GM12878 (cell line): ENCODE measurements at regions of chr14 and their contacts with region 1.

Region 1: GRCh38 chr14:50599700-50600444 is 39.9 kb downstream of the ATL1 start:
- DNase-seq: no peak
- ATAC-seq: peak; percentile 76
- H3K4me3 ChIP-seq: no peak overlapping the region
- H3K27ac ChIP-seq: no peak overlapping the region
- H3K4me1 ChIP-seq: no peaks in the 10 kb centered on the region
- H3K27me3 ChIP-seq: no peaks in the 10 kb centered on the region
- CTCF ChIP-seq: peak; percentile 49 to 67 (median 55); a peak in 5 of 6 replicates
- EP300 ChIP-seq: no peak
- POLR2A ChIP-seq: no peak
- RAD21 ChIP-seq: peak; percentile 79

Region 2: DNA sequence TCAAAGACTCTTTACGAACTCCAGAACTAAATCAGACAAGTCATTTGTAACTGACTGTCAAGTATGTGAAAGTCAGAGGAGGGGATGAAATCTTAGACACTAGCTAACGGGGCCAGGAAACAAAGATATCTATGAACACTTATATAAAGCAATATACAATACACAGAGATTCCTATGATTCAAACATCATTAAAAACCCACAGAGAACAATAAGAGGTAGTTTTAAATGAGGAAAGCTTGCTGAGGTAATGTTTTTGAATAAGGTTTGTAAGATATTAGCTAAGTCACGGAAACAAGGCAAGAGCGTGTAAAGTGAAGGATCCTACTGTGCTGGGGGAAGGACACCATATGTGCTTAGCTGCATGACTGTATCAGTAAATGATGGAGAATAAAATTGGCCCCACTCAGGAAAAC is 31.5 kb after region 1 on chr14:
- CTCF ChIA-PET with region 1: interaction called, 11 read pairs
- POLR2A ChIA-PET with region 1: no interaction called
- RAD21 ChIA-PET with region 1: interaction called, 4 read pairs
- SMC1A ChIA-PET with region 1: interaction called, 4 read pairs
- in situ Hi-C with region 1: no loop called
- intact Hi-C with region 1: no loop called
- DNase-seq: no peak
- ATAC-seq: no peak
- H3K4me3 ChIP-seq: no peak overlapping the region
- H3K27ac ChIP-seq: no peak overlapping the region
- H3K4me1 ChIP-seq: no peaks in the 10 kb centered on the region
- H3K27me3 ChIP-seq: no peaks in the 10 kb centered on the region
- CTCF ChIP-seq: no peak
- EP300 ChIP-seq: no peak
- POLR2A ChIP-seq: no peak
- RAD21 ChIP-seq: no peak

Region 3: GRCh38 chr14:50762001-50762930 is 162.4 kb after region 1 on chr14:
- CTCF ChIA-PET with region 1: interaction called, 13 read pairs
- POLR2A ChIA-PET with region 1: no interaction called
- RAD21 ChIA-PET with region 1: interaction called, 4 read pairs
- SMC1A ChIA-PET with region 1: interaction called, 17 read pairs
- in situ Hi-C with region 1: no loop called
- intact Hi-C with region 1: no loop called
- DNase-seq: no peak
- ATAC-seq: peak; percentile 88
- H3K4me3 ChIP-seq: no peak overlapping the region
- H3K27ac ChIP-seq: peak overlapping the region; percentile 65
- H3K4me1 ChIP-seq: peaks cover 15% of the 10 kb centered on the region; the same call in 1 of the 2 replicates
- H3K27me3 ChIP-seq: no peaks in the 10 kb centered on the region
- CTCF ChIP-seq: no peak
- EP300 ChIP-seq: peak; percentile 12 to 22; a peak in 1 of 4 replicates
- POLR2A ChIP-seq: no peak
- RAD21 ChIP-seq: no peak

Region 4: DNA sequence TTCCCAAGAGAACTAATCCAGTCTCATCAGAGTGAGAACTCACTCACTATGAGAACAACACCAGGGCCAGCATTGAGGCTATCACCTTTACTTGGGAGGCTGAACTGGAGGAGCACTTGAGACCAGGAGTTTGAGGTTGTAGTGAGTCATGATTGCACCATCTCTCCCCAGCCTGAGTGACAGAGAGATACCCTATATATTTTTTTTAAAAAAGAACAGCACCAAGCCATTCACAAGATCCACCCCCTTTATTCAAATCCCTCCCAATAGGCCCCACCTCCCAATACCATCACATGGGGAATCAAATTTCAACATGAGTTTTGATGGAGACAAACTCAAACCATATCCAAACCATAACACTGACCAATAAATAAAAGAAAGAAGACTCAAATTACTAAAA is 636.4 kb after region 1 on chr14:
- CTCF ChIA-PET with region 1: no interaction called
- POLR2A ChIA-PET with region 1: no interaction called
- RAD21 ChIA-PET with region 1: no interaction called
- SMC1A ChIA-PET with region 1: no interaction called
- in situ Hi-C with region 1: no loop called
- intact Hi-C with region 1: no loop called
- DNase-seq: no peak
- ATAC-seq: no peak
- H3K4me3 ChIP-seq: no peak overlapping the region
- H3K27ac ChIP-seq: no peak overlapping the region
- H3K4me1 ChIP-seq: no peaks in the 10 kb centered on the region
- H3K27me3 ChIP-seq: no peaks in the 10 kb centered on the region
- CTCF ChIP-seq: no peak
- EP300 ChIP-seq: no peak
- POLR2A ChIP-seq: no peak
- RAD21 ChIP-seq: no peak